ENCODE measurements at regions of chr10 and their contacts with region 1.

Region 1: GRCh38 chr10:122298598-122299301 is 27.7 kb downstream of the BTBD16 start:
- DNase-seq: peak; percentile 50 to 56
- ATAC-seq: peak; percentile 78 to 82
- H3K4me3 ChIP-seq: no peak overlapping the region
- H3K27ac ChIP-seq: no peak overlapping the region
- H3K4me1 ChIP-seq: peaks cover 0 to 6% of the 10 kb centered on the region in 2 donors
- H3K27me3 ChIP-seq: peaks cover 0 to 3% (median 0%) of the 10 kb centered on the region in 3 donors
- CTCF ChIP-seq: peak; percentile 79 to 92 (median 86)
- POLR2A ChIP-seq: no peak

Region 2: DNA sequence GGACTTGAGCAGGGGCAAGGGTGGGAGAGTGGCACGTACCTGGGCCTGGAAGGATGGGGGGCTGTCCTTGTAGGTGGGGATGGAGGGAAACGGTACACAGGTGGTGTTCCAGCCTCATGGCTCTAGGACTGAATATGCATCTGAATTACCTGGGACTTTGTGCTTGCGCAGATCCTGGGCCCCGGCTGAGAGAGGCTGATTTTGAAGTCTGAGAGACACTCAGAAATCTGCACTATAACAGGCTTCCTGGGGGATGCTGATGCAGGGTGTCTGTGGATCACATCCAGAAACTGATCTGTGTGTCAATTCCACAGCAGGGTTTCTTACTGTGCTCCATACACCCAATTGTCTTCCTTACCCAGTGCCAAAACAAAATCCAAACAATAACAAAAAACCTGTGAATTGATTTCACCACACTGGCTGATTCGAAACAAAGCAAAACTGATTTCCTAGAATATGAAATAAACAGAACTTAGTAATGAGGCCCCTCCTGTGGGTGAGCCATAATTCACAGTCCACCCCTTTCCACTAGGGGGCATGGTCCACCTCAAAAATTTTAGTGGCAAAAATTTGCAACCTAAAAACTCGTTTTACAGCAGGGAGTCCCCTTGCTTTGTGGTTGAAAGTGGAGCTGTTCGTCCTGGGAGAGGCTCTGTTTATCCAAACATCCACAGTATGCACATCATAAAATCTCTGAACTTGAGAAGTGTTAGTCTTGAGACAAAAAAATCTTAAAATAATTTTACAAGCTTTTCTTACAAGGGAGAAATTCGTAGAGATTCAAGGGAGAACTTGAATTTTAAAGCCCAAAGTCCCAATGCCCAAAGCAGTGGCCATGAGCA is 43.8 kb after region 1 on chr10:
- in situ Hi-C with region 1: no loop called
- intact Hi-C with region 1: loop called (anchors 5 kb)
- DNase-seq: no peak
- ATAC-seq: peak; percentile 37 to 44
- H3K4me3 ChIP-seq: no peak overlapping the region
- H3K27ac ChIP-seq: no peak overlapping the region
- H3K4me1 ChIP-seq: peaks cover 0 to 8% of the 10 kb centered on the region in 2 donors
- H3K27me3 ChIP-seq: no peaks in the 10 kb centered on the region
- CTCF ChIP-seq: peak; percentile 51 to 78 (median 73)
- POLR2A ChIP-seq: no peak

Region 3: GRCh38 chr10:122435212-122435827 is 136.6 kb after region 1 on chr10:
- in situ Hi-C with region 1: loop called (anchors 5 to 10 kb)
- intact Hi-C with region 1: loop called (anchors 1 kb)
- DNase-seq: no peak
- ATAC-seq: no peak
- H3K4me3 ChIP-seq: no peak overlapping the region
- H3K27ac ChIP-seq: no peak overlapping the region
- H3K4me1 ChIP-seq: no peaks in the 10 kb centered on the region
- H3K27me3 ChIP-seq: no peaks in the 10 kb centered on the region
- CTCF ChIP-seq: peak; percentile 64 to 87 (median 66)
- POLR2A ChIP-seq: no peak

Region 4: DNA sequence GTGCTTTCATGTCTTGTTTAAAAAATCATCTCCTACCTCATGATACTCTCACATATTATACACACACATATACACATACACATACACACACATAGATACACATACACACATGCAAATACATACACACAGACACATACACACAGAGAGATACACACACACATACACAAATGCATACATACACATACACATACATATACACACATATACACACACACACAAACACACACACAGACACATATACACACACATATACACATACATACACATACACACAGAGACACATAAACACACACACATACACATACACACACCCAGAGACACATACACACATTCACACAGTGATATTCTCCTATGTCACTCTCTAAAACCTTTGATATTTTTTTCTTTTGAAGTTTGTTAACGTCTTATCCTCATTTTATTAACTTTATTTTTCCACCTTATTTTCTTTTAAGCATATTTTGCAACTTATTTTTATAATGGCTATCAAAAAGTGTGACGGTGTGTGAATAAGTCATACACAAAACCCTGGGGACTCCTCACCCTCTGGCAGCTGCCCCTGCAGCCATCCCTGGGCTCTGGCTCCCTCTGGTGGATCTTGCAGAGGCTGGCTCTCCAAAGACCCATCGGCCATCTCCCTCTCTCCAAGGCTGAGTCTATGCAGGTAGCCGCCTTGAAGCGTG is 404.8 kb after region 1 on chr10:
- in situ Hi-C with region 1: no loop called
- intact Hi-C with region 1: loop called (anchors 5 kb)
- DNase-seq: peak; percentile 13 to 28
- ATAC-seq: peak in 1 of 2 donors; percentile 77
- H3K4me3 ChIP-seq: no peak overlapping the region
- H3K27ac ChIP-seq: no peak overlapping the region
- H3K4me1 ChIP-seq: no peaks in the 10 kb centered on the region
- H3K27me3 ChIP-seq: no peaks in the 10 kb centered on the region
- CTCF ChIP-seq: peak; percentile 37 to 70 (median 57)
- POLR2A ChIP-seq: no peak